Naive thymus-derived CD4-positive, alpha-beta T cell (primary cell): ENCODE measurements at regions of chr6 and their contacts with region 1.

Region 1: DNA sequence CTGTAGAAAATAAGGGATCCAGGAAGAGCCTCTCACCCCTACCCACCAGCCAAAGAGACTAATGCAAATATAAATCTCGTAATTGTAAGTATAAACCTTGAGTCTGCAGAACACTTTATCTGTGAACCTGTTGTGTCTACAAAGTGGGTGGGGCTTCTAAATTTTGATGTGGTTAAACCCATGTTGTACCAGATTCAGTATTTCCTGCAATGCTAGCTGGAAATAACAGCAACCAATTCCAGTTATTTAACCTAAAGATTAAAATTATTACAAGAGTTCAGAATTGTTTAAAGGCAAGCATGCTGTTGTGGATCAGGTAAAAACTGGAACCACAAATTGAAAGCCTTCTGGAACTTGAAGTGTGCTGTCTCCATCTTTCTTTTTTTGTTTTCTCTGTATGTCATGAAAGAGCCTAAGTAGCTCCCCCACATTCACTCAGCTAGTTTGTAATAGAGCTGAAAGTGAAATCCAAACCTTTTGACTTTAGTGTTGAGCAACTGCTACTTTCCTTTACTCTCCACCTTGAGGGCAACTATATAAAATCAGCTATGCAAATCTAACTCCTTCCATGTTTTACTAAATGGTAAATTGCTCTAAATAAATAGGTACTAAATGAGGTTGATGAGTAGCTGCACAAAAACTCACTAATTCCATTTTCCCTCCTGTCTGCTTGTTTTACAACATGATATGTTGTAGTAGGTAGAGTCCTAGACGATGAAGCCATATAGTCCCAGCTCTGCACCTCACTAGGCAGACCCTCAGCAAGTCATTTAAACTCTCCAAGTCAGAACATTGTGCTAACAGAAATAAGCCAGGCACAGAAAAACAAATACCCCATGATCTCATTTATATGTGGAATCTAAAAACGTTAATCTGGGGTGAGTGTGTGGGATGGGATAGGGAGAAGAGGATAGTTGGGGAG is 17.9 kb upstream of the THEMIS start:
- DNase-seq: peak in 7 of 9 donors; percentile 68 to 85 (median 80)
- ATAC-seq: peak; percentile 86
- H3K4me3 ChIP-seq: peak overlapping the region; percentile 79
- H3K4me3 Mint-ChIP-seq: peak overlapping the region; percentile 74 to 96 (median 88)
- H3K27ac ChIP-seq: peak overlapping the region; percentile 50
- H3K27ac Mint-ChIP-seq: peak overlapping the region; percentile 83 to 98 (median 93)
- H3K4me1 ChIP-seq: peaks cover 58 to 65% of the 10 kb centered on the region in 2 donors
- H3K4me1 Mint-ChIP-seq: peaks cover 33 to 95% (median 85%) of the 10 kb centered on the region in 7 donors
- H3K27me3 ChIP-seq: no peaks in the 10 kb centered on the region
- H3K27me3 Mint-ChIP-seq: no peaks in the 10 kb centered on the region

Region 2: DNA sequence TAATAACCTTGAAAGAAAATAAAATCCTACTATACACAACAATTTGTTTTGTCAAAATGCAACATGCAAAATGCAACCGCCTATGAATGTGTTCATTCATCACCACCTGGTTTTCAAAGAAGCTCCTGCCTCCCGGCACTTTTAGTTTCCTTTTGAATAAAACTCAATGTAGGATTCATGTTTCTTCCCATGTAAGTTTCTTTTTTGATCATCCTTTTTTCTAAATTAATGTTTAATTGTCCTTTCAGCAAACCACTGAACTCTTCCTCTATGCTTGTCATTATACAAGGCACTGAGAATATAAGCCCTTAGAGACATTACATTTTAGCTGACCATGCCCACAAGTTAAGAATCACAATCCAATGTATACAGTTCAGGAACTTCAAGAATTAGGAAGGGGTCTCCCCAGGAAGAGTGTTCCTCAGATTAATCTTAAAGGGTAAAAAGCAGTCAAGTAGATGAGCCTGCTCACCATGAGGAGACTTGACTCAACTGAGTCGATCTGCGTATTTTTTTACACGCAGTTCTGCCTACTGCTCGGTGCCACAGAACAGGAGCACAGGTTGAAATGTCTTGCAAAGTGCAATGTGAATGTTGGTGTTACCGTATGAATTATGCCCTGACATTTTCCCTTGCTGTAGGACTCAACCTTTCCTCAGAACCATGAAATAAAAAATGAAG is 10.7 kb before region 1 on chr6:
- CTCF ChIA-PET with region 1: interaction called, 10 read pairs
- POLR2A ChIA-PET with region 1: interaction called, 12 read pairs
- intact Hi-C with region 1: loop called in 1 of 2 experiments (anchors 1 kb)
- DNase-seq: no peak
- ATAC-seq: peak; percentile 50
- H3K4me3 ChIP-seq: peak overlapping the region; percentile 33
- H3K4me3 Mint-ChIP-seq: peak overlapping the region; percentile 30 to 85 (median 72)
- H3K27ac ChIP-seq: peak overlapping the region; percentile 42
- H3K27ac Mint-ChIP-seq: peak overlapping the region; percentile 60 to 95 (median 86)
- H3K4me1 ChIP-seq: peaks cover 0 to 46% of the 10 kb centered on the region in 2 donors
- H3K4me1 Mint-ChIP-seq: peaks cover 9 to 56% (median 43%) of the 10 kb centered on the region in 7 donors
- H3K27me3 ChIP-seq: no peaks in the 10 kb centered on the region
- H3K27me3 Mint-ChIP-seq: no peaks in the 10 kb centered on the region

Region 3: DNA sequence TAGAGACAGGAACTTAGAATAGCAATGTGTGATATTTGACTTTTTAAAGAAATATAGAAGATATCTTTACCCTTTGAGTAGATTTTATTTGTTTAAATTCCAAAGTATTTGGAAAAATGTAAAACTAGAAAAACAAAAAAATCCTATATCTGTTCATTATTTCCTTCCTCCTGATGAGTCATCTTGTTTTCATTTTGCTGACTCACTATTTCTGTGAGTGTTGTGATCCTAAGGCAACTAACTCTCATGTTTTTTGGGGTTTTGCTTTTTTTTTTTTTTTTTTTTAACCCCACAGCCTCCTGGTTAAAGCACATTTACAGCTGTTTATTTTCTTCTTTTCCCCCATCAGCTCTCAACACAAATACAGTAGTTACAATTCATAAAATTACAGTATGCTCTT is 19.9 kb after region 1 on chr6:
- CTCF ChIA-PET with region 1: interaction called, 6 read pairs
- POLR2A ChIA-PET with region 1: interaction called, 30 read pairs
- intact Hi-C with region 1: loop called (anchors 1 kb)
- DNase-seq: no peak
- ATAC-seq: no peak
- H3K4me3 ChIP-seq: no peak overlapping the region
- H3K4me3 Mint-ChIP-seq: peak overlapping the region in 2 of 10 donors; percentile 14 to 39
- H3K27ac ChIP-seq: no peak overlapping the region
- H3K27ac Mint-ChIP-seq: peak overlapping the region in 5 of 9 donors; percentile 28 to 97 (median 57)
- H3K4me1 ChIP-seq: peaks cover 25 to 40% of the 10 kb centered on the region in 2 donors
- H3K4me1 Mint-ChIP-seq: peaks cover 21 to 81% (median 63%) of the 10 kb centered on the region in 7 donors
- H3K27me3 ChIP-seq: no peaks in the 10 kb centered on the region
- H3K27me3 Mint-ChIP-seq: no peaks in the 10 kb centered on the region

Region 4: DNA sequence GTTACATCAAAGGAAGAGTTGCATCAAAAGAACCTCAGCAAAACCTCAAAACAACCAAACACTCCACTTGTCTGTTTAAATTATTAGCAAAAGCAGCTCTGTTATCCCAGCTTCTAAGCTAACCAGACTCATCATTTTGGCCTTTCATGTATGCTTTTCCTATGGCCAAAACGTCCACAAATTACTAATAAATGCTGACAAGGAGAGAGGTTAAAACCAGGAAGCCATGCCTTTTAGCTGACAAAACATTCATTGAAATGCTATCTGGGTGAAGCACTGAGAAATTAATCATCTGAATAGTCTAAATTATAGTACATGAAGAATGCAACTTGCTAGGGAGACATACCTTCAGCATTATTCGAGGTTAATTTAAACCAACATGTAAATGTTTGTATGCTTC is 1044.8 kb after region 1 on chr6:
- CTCF ChIA-PET with region 1: no interaction called
- POLR2A ChIA-PET with region 1: no interaction called
- intact Hi-C with region 1: no loop called
- DNase-seq: no peak
- ATAC-seq: no peak
- H3K4me3 ChIP-seq: no peak overlapping the region
- H3K4me3 Mint-ChIP-seq: no peak overlapping the region
- H3K27ac ChIP-seq: no peak overlapping the region
- H3K27ac Mint-ChIP-seq: no peak overlapping the region
- H3K4me1 ChIP-seq: no peaks in the 10 kb centered on the region
- H3K4me1 Mint-ChIP-seq: no peaks in the 10 kb centered on the region
- H3K27me3 ChIP-seq: no peaks in the 10 kb centered on the region
- H3K27me3 Mint-ChIP-seq: peaks cover 0 to 18% (median 0%) of the 10 kb centered on the region in 5 donors